Activated CD8-positive, alpha-beta memory T cell treated with anti-CD3 and anti-CD28 coated beads, Interleukin-2, amount 10 ng/mL, durations not matched to agents 7 days and 5 days (primary cell): ENCODE measurements at regions of chr1 and their contacts with region 1.

Region 1: GRCh38 chr1:89310505-89310904 is 37.8 kb upstream of the GBP5 start:
- DNase-seq: no peak
- ATAC-seq: peak; percentile 88
- H3K4me3 Mint-ChIP-seq: peak overlapping the region; percentile 42
- H3K27ac Mint-ChIP-seq: peak overlapping the region; percentile 99
- H3K4me1 Mint-ChIP-seq: peaks cover 43% of the 10 kb centered on the region
- H3K27me3 Mint-ChIP-seq: no peaks in the 10 kb centered on the region

Region 2: GRCh38 chr1:89149229-89149628 is 161.3 kb before region 1 on chr1:
- CTCF ChIA-PET with region 1: no interaction called
- DNase-seq: no peak
- ATAC-seq: no peak
- H3K4me3 Mint-ChIP-seq: no peak overlapping the region
- H3K27ac Mint-ChIP-seq: no peak overlapping the region
- H3K4me1 Mint-ChIP-seq: peaks cover 6% of the 10 kb centered on the region
- H3K27me3 Mint-ChIP-seq: no peaks in the 10 kb centered on the region

Region 3: GRCh38 chr1:89286549-89287180 is 23.8 kb before region 1 on chr1:
- CTCF ChIA-PET with region 1: interaction called, 16 read pairs
- DNase-seq: no peak
- ATAC-seq: peak; percentile 88
- H3K4me3 Mint-ChIP-seq: peak overlapping the region; percentile 27
- H3K27ac Mint-ChIP-seq: peak overlapping the region; percentile 97
- H3K4me1 Mint-ChIP-seq: peaks cover 74% of the 10 kb centered on the region
- H3K27me3 Mint-ChIP-seq: no peaks in the 10 kb centered on the region

Region 4: GRCh38 chr1:89295187-89295586 is 15.3 kb before region 1 on chr1:
- CTCF ChIA-PET with region 1: interaction called, 11 read pairs
- DNase-seq: no peak
- ATAC-seq: peak; percentile 56
- H3K4me3 Mint-ChIP-seq: no peak overlapping the region
- H3K27ac Mint-ChIP-seq: peak overlapping the region; percentile 33
- H3K4me1 Mint-ChIP-seq: peaks cover 65% of the 10 kb centered on the region
- H3K27me3 Mint-ChIP-seq: no peaks in the 10 kb centered on the region

Region 5: GRCh38 chr1:89369331-89369730 is 58.8 kb after region 1 on chr1:
- CTCF ChIA-PET with region 1: no interaction called
- DNase-seq: no peak
- ATAC-seq: no peak
- H3K4me3 Mint-ChIP-seq: no peak overlapping the region
- H3K27ac Mint-ChIP-seq: no peak overlapping the region
- H3K4me1 Mint-ChIP-seq: peaks cover under 1% of the 10 kb centered on the region
- H3K27me3 Mint-ChIP-seq: no peaks in the 10 kb centered on the region